A549 (cell line): ENCODE measurements at regions of chr17 and their contacts with region 1.

Region 1: GRCh38 chr17:82418001-82418986 is at the starts of genes HEXD and OGFOD3:
- DNase-seq: peak; percentile 86 to 90
- ATAC-seq: peak; percentile 83 to 86
- H3K4me3 ChIP-seq: peak within 1 kb of the TSS; percentile 67
- H3K27ac ChIP-seq: peak within 1 kb of the TSS; percentile 92 to 96
- H3K4me1 ChIP-seq: peaks cover 11% of the 10 kb centered on the region; the same call in 2 of the 3 replicates
- CTCF ChIP-seq: no peak
- EP300 ChIP-seq: no peak
- POLR2A ChIP-seq: peak; percentile 81
- RAD21 ChIP-seq: no peak; a peak in 1 of 5 replicates
- polyA plus RNA-seq, gene HEXD: 18.0 and 18.4 TPM in 2 replicates
- polyA plus RNA-seq, gene OGFOD3: 14.9 and 15.2 TPM in 2 replicates

Region 2: DNA sequence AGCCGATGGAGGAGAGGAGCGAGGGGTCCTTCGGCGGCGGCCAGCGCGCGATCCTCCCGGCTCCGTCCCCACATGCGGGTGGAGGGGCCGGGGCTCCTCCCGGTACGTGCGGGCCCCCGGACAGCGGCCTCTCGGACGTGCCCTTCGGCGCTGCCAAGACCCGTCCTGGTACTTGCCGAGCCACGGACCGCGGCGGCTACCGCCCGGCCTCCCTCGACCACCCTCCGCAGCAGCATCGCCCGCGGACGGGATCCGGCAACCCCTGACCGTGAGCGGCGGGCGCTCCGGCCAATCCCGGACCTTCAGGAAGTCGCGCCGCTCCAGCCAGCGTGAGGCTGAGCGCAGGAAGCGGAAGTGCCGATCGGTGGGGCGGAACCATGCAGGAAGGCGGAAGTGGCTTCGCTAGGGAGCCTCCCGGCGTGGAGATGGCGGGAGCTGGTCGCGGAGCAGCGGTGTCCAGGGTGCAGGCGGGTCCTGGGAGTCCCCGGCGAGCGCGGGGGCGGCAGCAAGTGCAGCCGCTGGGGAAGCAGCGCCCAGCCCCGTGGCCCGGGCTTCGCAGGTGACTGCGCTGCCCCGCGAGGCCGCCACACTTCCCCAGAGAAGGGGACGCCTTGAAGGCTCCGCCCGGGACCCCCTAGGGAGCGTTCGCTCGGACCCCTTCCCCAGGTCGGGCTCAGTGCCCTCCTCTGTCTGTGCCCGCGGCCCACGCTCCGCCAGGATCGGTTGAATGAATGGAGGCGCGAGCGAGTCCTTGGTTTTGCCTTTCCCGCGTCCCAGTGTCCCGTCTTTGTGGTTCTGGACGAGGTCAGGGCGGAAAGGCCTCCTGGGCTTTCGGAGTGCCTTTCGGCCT is 751.7 kb before region 1 on chr17 and contains the starts of genes CCDC137 and OXLD1:
- CTCF ChIA-PET with region 1: no interaction called
- POLR2A ChIA-PET with region 1: no interaction called
- DNase-seq: peak; percentile 97 to 98
- ATAC-seq: peak; percentile 96 to 99
- H3K4me3 ChIP-seq: peak within 1 kb of the TSS; percentile 99
- H3K27ac ChIP-seq: peak within 1 kb of the TSS; percentile 97 to 99
- H3K4me1 ChIP-seq: peaks cover 22% of the 10 kb centered on the region
- CTCF ChIP-seq: no peak
- EP300 ChIP-seq: no peak
- POLR2A ChIP-seq: peak; percentile 97
- RAD21 ChIP-seq: no peak
- polyA plus RNA-seq, gene CCDC137: 16.6 and 22.6 TPM in 2 replicates
- polyA plus RNA-seq, gene OXLD1: 34.6 and 38.7 TPM in 2 replicates

Region 3: DNA sequence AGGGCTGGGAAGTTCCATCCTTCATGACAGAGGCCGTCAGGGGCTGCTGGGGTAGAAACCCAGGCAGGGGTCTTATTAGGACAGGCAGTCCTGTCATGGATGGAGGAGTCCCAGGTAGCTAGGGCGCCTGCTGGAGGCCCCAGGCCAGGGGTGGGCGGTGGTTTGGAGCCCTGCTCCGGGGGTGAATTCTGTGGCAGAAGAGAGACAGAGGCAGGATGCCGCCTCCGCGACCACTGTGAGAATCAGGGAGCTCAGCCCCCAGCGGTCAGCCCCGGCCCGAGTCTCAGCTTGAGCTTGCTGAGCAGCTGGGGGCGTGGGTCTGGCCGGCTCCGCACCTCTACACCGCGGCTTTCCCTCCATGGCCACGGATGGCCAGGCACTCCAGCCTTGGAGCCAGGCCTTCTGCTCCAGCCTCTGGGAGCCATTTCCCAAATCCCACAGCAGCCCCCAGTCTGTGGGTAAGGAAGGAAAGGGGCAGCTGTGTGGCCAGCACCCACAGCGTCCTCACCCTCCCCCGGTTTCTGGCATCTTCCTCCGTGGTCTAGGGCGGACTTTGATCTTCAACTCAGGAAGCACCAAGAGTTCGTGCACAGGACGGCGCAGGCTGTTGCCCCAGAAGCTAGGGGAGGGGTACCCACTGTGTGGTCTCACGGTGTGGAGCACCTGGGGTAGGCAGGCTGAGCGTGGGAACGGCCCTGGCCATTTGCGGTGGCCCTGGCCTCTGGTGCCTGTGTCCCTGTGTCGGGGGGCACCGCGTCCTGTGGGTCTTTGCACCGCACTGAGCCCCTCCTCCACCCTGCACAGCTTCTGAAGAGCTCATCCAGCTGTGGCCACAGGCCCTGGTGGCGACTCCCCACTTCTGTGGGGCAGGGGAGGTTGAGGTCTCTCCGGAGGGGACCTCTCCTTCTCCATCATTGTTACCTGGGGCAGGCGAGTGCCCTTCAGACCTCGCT is 115.0 kb before region 1 on chr17:
- CTCF ChIA-PET with region 1: interaction called, 25 read pairs
- POLR2A ChIA-PET with region 1: no interaction called
- DNase-seq: no peak
- ATAC-seq: 0 out of 6 replicates have a peak, but pooled peaks of 1 of the 2 experiments have one; percentile 2
- H3K4me3 ChIP-seq: no peak overlapping the region
- H3K27ac ChIP-seq: peak overlapping the region; percentile 31 to 96; a peak in 4 of 6 replicates
- H3K4me1 ChIP-seq: peaks cover 39% of the 10 kb centered on the region
- CTCF ChIP-seq: no peak
- EP300 ChIP-seq: no peak
- POLR2A ChIP-seq: no peak
- RAD21 ChIP-seq: no peak

Region 4: DNA sequence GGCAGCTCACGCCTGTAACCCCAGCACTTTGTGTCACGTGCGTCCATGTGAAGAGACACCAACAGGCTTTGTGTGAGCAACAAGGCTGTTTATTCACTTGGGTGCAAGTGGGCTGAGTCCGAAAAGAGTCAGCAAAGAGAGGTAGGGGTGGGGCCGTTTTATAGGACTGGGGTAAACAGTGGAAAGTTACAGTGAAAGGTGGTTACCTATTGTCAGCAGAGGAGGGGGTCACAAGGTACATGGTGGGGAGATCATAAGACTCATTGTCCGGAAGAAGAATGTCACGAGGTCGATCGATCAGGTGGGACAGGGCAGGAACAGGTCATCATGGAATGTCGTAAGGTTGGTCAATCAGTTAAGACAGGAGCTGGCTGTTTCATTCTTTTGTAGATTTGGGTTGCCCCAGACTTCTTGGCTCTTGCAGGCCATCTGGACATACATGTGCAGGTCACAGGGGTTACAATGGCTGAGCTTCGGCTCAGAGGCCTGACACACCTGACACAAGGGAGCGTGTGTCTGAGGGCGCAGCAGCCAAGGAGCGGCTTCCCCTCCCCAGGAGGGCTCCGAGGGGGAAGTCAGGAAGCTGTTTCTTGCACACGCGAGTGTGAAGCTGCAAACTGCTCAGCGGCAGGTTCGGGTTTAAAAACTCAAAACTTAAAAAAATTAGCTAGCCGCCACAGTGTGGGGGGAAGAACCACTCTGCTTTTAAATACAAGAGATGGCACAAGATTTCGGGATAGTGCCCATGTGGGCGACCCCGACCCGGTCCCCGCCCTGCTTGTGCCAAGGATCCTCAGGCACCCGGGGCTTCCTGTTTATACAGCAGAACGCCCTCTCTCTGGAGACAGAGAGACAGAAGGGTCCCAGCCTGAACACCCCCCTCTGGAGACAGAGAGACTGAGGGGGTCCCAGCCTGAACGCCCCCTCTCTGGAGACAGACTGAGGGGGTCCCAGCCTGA is 71.7 kb before region 1 on chr17:
- CTCF ChIA-PET with region 1: interaction called, 117 read pairs
- POLR2A ChIA-PET with region 1: no interaction called
- DNase-seq: no peak
- ATAC-seq: no peak
- H3K4me3 ChIP-seq: no peak overlapping the region
- H3K27ac ChIP-seq: no peak overlapping the region; a peak in 1 of 6 replicates
- H3K4me1 ChIP-seq: peaks cover 15% of the 10 kb centered on the region
- CTCF ChIP-seq: no peak
- EP300 ChIP-seq: no peak
- POLR2A ChIP-seq: no peak
- RAD21 ChIP-seq: no peak

Region 5: GRCh38 chr17:82358465-82359350 is 59.6 kb before region 1 on chr17 and contains the start of gene TEX19:
- CTCF ChIA-PET with region 1: interaction called, 44 read pairs
- POLR2A ChIA-PET with region 1: no interaction called
- DNase-seq: peak; percentile 54 to 70
- ATAC-seq: peak; percentile 40 to 58; a peak in 5 of 6 replicates
- H3K4me3 ChIP-seq: no peak within 1 kb of the TSS
- H3K27ac ChIP-seq: peak within 1 kb of the TSS; percentile 38 to 70; a peak in 5 of 6 replicates
- H3K4me1 ChIP-seq: peaks cover 18% of the 10 kb centered on the region
- CTCF ChIP-seq: no peak
- EP300 ChIP-seq: no peak
- POLR2A ChIP-seq: no peak
- RAD21 ChIP-seq: peak in 1 of 2 experiments; percentile 19; a peak in 1 of 5 replicates
- polyA plus RNA-seq, gene TEX19: 0.32 and 0.43 TPM in 2 replicates

Region 6: DNA sequence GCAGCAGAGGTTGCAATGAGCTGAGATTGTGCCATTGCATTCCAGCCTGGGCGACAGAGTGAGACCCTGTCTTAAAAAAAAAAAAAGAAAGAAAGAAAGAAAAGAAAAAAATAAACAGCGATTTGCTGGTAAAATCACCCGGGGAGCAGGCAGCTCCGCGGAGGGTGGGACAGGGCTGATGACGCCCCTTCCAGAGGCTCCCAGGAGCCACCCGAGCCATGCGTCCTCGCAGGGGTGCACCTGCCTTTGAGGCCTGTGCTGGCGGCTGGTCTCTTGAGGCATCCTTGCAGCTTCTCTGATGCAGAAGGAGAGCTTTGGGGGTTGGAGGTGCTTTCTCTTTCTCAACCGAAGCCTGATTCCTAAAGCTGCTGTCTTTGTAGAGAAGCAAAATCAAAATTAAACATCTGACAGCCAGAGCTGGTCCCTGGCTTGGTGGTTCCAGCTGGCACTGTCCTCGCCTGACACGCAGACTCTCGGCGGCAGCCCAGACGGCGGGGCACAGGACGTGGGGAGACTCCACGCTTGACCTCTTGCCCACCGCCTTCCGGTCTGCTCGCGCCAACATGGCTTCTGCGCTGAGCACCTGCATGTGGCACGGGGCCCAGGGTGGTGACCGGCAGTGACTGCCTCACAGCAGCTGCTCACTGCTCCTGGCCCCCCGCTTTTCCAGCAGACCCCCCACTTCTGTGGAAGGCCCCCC is 40.2 kb before region 1 on chr17:
- CTCF ChIA-PET with region 1: interaction called, 10 read pairs
- POLR2A ChIA-PET with region 1: no interaction called
- DNase-seq: no peak
- ATAC-seq: no peak
- H3K4me3 ChIP-seq: no peak overlapping the region
- H3K27ac ChIP-seq: no peak overlapping the region
- H3K4me1 ChIP-seq: peaks cover 5% of the 10 kb centered on the region; the same call in 1 of the 3 replicates
- CTCF ChIP-seq: no peak
- EP300 ChIP-seq: no peak
- POLR2A ChIP-seq: no peak
- RAD21 ChIP-seq: no peak

Region 7: DNA sequence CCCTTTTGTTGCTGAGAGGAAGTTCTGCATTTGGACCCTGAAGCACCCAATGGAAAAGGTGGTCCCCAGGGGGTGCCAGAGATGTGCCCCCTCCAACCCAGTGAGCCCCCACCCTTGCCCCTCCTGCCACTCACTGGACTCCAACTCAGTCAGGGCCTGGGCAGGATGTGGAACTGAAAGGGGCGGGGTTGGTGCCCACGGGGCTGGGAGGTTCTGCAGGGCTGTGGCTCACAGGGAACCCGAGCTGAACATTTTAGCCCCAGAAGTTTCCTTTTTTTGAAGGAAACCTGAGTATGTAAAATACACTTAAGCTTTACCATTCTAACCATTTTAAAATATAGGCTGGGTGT is 15.9 kb after region 1 on chr17:
- CTCF ChIA-PET with region 1: interaction called, 21 read pairs
- POLR2A ChIA-PET with region 1: no interaction called
- DNase-seq: no peak
- ATAC-seq: no peak
- H3K4me3 ChIP-seq: no peak overlapping the region
- H3K27ac ChIP-seq: no peak overlapping the region
- H3K4me1 ChIP-seq: no peaks in the 10 kb centered on the region
- CTCF ChIP-seq: no peak
- EP300 ChIP-seq: no peak
- POLR2A ChIP-seq: no peak
- RAD21 ChIP-seq: no peak